PC-3 (cell line): ENCODE measurements at regions of chr4 and their contacts with region 1.

Region 1: DNA sequence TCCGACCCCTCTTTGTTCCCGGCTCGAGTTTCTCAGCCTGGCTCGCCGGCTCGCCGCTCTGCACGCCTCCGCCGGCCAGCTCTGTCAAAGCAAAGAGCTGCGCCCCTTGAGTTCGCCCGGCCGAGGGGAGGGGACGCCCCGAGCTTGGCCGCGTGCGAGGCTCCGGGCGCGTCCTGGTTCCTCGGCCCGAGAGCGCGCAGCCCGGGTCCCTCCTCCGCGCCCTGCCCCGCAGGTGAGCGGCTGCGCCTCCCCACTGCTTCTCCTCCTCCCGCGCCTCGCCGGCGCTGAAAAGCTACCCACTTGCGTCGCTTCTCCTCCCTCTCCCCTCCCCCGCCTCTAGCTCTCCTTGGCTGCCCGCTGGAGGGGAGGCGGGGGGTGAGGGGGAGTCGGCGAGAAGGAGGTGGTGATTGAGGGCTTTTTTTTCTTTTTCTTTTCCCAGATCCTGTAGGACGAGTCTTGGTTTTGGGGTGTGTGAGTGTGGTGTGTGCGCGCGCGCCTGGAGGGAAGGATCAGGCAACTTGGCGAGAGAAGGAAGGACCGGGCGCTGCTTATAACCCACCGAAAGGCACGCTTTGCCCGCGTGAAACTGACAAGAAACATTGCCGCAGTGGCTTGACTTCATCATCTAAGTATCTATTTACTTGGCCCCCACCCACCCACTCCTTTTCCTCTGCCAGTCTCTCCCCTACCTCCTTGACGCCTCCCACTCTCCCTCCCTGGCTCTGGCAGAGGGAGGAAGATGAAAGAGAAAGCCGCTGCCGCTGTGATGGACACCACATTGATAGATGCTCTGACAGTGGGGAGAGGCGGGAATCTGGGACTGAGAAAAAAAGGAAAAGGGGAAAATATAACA is at the start of gene LEF1:
- DNase-seq: peak; percentile 20
- ATAC-seq: peak; percentile 39
- H3K4me3 ChIP-seq: peak within 1 kb of the TSS; percentile 69
- H3K27ac ChIP-seq: no peak within 1 kb of the TSS
- H3K4me1 ChIP-seq: no peaks in the 10 kb centered on the region
- H3K27me3 ChIP-seq: peaks cover 73% of the 10 kb centered on the region
- CTCF ChIP-seq: no peak
- total RNA-seq, gene LEF1: 0.58 and 2.4 TPM in 2 replicates

Region 2: DNA sequence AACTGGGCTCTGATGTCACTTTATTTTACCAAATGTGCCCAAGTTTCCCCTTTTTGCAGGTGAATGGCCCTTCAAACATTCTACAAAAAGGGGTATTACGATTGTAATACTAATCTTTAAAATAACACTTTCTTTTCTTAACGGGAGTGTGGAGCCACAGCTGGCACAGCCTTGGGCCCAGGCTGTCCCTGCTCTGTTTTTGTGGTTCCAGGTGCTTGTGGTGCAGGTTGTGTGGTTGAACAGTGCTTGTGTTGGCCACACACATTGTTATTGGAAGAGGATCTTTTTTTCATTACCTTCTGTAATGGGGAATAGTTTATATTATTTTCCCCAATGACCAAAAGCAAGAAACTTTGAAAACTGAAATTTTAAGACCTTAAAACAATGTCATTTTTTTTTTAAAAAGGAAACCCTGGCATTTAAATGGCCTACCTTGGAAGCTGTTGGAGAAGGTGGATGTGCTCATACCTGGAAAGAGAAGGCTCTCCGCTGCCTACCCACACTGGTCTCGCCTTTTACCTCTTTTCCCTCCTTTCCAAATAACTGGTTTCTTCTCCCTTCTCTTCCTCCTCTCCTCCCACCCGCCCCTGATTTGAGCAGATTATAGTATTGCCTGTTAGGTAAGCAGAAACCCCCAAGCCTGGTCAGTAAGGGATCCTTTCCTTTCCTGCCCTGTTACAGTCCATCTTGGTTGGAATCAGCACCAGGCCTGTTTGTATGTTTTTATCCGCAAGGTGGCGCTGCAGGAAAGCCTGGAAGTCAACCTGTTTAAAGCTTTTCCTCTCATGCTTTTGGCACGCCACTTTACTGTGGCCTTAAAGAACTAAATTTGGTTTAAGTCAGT is 150.6 kb before region 1 on chr4:
- CTCF ChIA-PET with region 1: no interaction called
- POLR2A ChIA-PET with region 1: no interaction called
- intact Hi-C with region 1: no loop called
- DNase-seq: peak; percentile 78
- ATAC-seq: peak; percentile 73
- H3K4me3 ChIP-seq: no peak overlapping the region
- H3K27ac ChIP-seq: no peak overlapping the region
- H3K4me1 ChIP-seq: no peaks in the 10 kb centered on the region
- H3K27me3 ChIP-seq: no peaks in the 10 kb centered on the region
- CTCF ChIP-seq: peak; percentile 83

Region 3: GRCh38 chr4:108118490-108118889 is 50.4 kb before region 1 on chr4:
- CTCF ChIA-PET with region 1: no interaction called
- POLR2A ChIA-PET with region 1: no interaction called
- intact Hi-C with region 1: loop called (anchors 5 kb)
- DNase-seq: peak; percentile 74
- ATAC-seq: peak; percentile 92
- H3K4me3 ChIP-seq: peak overlapping the region; percentile 33; the same call in 1 of the 2 replicates
- H3K27ac ChIP-seq: peak overlapping the region; percentile 81
- H3K4me1 ChIP-seq: peaks cover 26% of the 10 kb centered on the region
- H3K27me3 ChIP-seq: no peaks in the 10 kb centered on the region
- CTCF ChIP-seq: no peak

Region 4: DNA sequence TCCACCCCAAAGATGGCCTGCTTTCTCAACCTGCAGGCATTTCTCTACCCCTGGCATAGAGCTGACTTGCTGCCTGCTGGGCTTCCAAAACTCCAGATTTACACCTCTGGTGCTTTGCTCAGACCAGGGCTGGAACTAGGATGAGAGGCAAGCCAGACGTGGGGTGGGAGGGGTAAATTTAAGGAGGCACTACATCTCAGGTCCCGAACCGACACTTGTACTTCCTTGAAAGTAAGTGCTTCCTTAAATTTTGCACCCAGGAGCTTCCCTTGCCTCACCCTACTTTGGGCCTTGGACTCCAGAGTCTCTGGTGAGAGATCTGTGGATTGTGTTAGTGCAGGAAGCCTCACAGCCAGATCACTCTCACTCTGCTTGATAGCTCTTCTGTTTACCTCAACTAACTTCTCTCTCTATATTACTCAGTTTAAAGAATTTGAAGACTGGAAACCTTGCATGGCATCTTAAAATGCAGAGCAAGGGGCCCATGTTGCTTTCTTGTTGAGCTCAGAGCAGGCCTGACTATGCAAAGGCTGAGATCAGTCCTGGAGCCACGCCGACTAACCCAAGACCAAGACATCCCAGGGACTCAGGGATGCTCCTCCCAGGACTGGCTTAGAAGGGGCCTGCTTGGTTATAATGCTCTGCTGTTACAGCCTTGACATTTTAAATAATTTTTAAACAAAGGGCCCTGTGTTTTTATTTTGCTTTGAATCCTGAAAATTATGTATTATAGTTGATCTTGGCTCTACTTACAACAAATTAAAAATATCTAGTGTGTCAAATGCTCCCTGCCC is 144.8 kb after region 1 on chr4:
- CTCF ChIA-PET with region 1: no interaction called
- POLR2A ChIA-PET with region 1: interaction called, 13 read pairs
- intact Hi-C with region 1: no loop called
- DNase-seq: no peak
- ATAC-seq: no peak
- H3K4me3 ChIP-seq: no peak overlapping the region
- H3K27ac ChIP-seq: no peak overlapping the region
- H3K4me1 ChIP-seq: no peaks in the 10 kb centered on the region
- H3K27me3 ChIP-seq: 0 out of 2 replicates have a peak, but pooled peaks cover 3% of the 10 kb centered on the region
- CTCF ChIP-seq: no peak